GM12878 (cell line): ENCODE measurements at regions of chr3 and their contacts with region 1.

Region 1: DNA sequence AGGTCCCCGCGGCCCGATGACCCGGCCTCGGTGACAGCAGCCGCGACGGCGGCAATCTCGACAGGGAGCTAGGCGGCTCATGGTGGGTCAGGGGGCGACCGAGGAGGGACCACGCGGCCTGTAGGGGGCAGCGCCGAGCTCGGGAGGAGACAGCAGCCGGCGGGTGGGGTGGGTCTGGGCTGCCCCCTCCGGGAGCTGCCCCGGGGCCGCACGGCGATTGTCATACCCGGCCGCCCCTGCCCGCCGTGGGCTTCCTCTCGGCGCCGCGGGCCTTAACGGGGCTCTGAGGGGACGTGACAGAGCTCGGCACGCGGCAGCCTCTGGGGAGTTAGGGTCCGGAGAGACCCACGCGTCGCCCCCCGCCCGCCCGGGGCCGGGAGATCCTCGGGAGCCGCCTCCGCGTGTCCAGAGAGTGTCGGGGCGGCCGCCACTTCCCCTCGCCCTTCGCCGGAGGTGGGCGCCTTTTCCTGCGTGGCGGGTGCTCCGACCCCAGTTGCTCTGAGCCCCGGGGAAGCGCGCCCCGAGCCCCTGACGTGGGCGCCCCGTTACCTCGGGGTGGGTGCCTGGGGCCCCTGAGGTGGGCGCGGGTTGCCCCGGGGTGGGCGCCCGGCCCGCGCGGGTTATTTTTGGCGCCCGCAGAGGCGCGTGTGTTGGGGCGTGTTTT is 539 bp upstream of the PLCL2 start:
- DNase-seq: no peak
- ATAC-seq: peak; percentile 71
- H3K4me3 ChIP-seq: peak overlapping the region; percentile 75
- H3K27ac ChIP-seq: peak overlapping the region; percentile 93
- H3K4me1 ChIP-seq: peaks cover 2% of the 10 kb centered on the region; the same call in 1 of the 2 replicates
- H3K27me3 ChIP-seq: no peaks in the 10 kb centered on the region
- CTCF ChIP-seq: peak; percentile 37 to 79 (median 74)
- EP300 ChIP-seq: no peak
- POLR2A ChIP-seq: peak; percentile 66
- RAD21 ChIP-seq: peak; percentile 64

Region 2: DNA sequence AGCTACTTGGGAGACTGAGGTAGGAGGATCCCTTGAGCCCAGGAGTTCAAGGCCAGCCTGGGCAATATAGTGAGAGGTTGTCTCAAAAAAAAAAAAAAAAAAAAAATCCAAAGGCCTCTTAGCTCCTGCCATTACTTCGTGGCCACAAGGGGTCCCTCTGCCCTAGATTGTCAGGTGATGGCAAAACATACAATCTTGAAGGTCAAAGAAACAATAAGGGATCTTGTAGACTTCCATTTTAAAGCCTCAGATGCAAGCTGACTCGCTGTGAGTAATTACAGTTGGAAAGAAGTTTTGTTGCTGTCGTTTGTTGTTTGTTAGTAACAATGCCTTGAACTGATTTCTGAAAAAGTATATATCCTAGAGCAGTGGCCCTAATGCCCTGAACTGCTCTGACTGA is 55.4 kb before region 1 on chr3:
- CTCF ChIA-PET with region 1: interaction called, 5 read pairs
- POLR2A ChIA-PET with region 1: interaction called, 4 read pairs
- RAD21 ChIA-PET with region 1: interaction called, 12 read pairs
- SMC1A ChIA-PET with region 1: interaction called, 5 read pairs
- in situ Hi-C with region 1: no loop called
- intact Hi-C with region 1: loop called (anchors 2 kb)
- DNase-seq: no peak
- ATAC-seq: peak; percentile 90
- H3K4me3 ChIP-seq: no peak overlapping the region
- H3K27ac ChIP-seq: no peak overlapping the region
- H3K4me1 ChIP-seq: peaks cover 8% of the 10 kb centered on the region
- H3K27me3 ChIP-seq: no peaks in the 10 kb centered on the region
- CTCF ChIP-seq: peak; percentile 58 to 65 (median 60)
- EP300 ChIP-seq: no peak
- POLR2A ChIP-seq: no peak
- RAD21 ChIP-seq: peak; percentile 93

Region 3: DNA sequence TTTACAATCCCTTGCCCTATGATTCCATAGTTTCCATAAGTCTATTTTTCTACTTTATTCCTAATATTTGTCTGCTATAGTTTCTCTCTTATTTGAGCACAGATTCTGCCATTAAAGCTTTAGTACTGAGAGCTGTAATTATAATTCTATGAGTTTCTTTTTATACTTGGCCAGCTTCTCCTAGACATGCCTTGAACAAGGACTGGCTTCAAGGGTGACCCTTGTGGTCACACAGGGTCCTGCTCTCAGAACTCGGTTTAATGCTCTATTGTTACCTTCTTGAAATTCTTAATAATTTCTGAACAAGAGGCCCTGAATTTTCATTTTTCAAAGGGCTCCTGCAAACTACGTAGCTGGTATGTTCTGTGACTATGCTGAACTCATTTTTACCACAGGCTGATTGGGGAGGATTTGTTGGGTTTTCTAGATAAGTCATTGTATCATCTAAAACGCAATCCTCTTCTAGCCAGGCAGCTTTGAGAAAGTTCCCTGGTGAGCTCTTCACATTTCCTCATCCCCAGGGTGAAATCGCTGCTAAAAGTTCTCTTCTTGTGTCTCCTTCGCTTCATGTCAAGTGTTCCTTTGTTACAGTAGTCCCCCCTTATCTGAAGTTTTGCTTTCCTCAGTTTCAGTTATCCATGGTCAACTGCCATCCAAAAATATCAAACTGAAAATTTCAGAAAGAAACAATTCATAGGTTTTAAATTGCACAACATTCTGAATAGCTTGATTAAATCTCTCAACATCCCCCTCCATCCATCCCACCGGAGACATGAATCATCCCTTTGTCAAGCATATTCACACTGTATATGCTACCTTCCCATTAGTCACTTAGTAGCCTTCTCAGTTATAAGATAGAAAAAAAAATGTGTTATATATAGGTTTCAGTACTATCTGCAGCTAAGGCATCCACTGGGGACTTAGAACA is 12.0 kb before region 1 on chr3:
- CTCF ChIA-PET with region 1: interaction called, 50 read pairs
- POLR2A ChIA-PET with region 1: interaction called, 3 read pairs
- RAD21 ChIA-PET with region 1: interaction called, 3 read pairs
- SMC1A ChIA-PET with region 1: interaction called, 5 read pairs
- in situ Hi-C with region 1: no loop called
- intact Hi-C with region 1: no loop called
- DNase-seq: no peak
- ATAC-seq: no peak
- H3K4me3 ChIP-seq: no peak overlapping the region
- H3K27ac ChIP-seq: no peak overlapping the region
- H3K4me1 ChIP-seq: no peaks in the 10 kb centered on the region
- H3K27me3 ChIP-seq: no peaks in the 10 kb centered on the region
- CTCF ChIP-seq: no peak
- EP300 ChIP-seq: no peak
- POLR2A ChIP-seq: no peak
- RAD21 ChIP-seq: no peak

Region 4: GRCh38 chr3:16912400-16913263 is 28.4 kb after region 1 on chr3:
- CTCF ChIA-PET with region 1: interaction called, 26 read pairs
- POLR2A ChIA-PET with region 1: interaction called, 4 read pairs
- RAD21 ChIA-PET with region 1: interaction called, 76 read pairs
- SMC1A ChIA-PET with region 1: interaction called, 68 read pairs
- in situ Hi-C with region 1: no loop called
- intact Hi-C with region 1: no loop called
- DNase-seq: peak; percentile 90
- ATAC-seq: peak; percentile 92
- H3K4me3 ChIP-seq: peak overlapping the region; percentile 27
- H3K27ac ChIP-seq: peak overlapping the region; percentile 99
- H3K4me1 ChIP-seq: peaks cover 49% of the 10 kb centered on the region
- H3K27me3 ChIP-seq: no peaks in the 10 kb centered on the region
- CTCF ChIP-seq: no peak
- EP300 ChIP-seq: peak; percentile 91 to 96
- POLR2A ChIP-seq: no peak
- RAD21 ChIP-seq: no peak

Region 5: DNA sequence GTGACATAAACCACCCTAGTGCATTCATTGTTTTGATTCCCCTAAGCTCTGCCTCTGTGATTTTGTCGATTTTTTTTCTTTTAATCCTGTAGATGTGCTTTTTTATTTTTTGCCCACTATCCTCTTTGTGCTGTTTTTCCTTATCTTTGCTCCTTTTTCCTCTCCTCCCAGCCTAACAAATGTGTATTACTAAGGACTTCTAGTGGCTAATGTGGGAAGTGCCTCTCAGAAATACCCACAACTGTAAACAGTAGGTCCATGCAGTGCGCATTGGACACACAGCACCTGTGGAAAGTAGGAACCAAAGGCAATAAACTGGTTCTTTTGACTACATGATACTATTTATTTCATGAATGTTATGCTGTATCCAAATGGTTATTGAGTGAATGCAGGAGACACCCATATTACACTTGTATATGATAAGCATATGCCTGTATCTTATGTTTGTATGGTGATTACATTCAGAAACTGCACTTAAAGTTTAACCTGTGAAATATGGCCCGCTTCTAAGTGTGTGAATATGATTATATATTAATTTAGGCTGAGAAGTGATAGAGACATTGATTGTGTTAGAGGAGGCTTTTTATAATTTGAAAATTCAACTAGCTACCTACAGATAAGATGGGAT is 148.3 kb after region 1 on chr3:
- CTCF ChIA-PET with region 1: interaction called, 43 read pairs
- POLR2A ChIA-PET with region 1: interaction called, 4 read pairs
- RAD21 ChIA-PET with region 1: interaction called, 54 read pairs
- SMC1A ChIA-PET with region 1: interaction called, 38 read pairs
- in situ Hi-C with region 1: no loop called
- intact Hi-C with region 1: loop called (anchors 2 kb)
- DNase-seq: no peak
- ATAC-seq: peak; percentile 81
- H3K4me3 ChIP-seq: no peak overlapping the region
- H3K27ac ChIP-seq: no peak overlapping the region
- H3K4me1 ChIP-seq: peaks cover 15% of the 10 kb centered on the region
- H3K27me3 ChIP-seq: no peaks in the 10 kb centered on the region
- CTCF ChIP-seq: peak; percentile 54 to 64 (median 54); a peak in 5 of 6 replicates
- EP300 ChIP-seq: no peak
- POLR2A ChIP-seq: no peak
- RAD21 ChIP-seq: peak; percentile 76

Region 6: GRCh38 chr3:17195856-17196604 is 311.8 kb after region 1 on chr3:
- CTCF ChIA-PET with region 1: interaction called, 5 read pairs
- POLR2A ChIA-PET with region 1: interaction called, 4 read pairs
- RAD21 ChIA-PET with region 1: interaction called, 12 read pairs
- SMC1A ChIA-PET with region 1: interaction called, 6 read pairs
- in situ Hi-C with region 1: no loop called
- intact Hi-C with region 1: no loop called
- DNase-seq: peak; percentile 83
- ATAC-seq: peak; percentile 91
- H3K4me3 ChIP-seq: no peak overlapping the region
- H3K27ac ChIP-seq: peak overlapping the region; percentile 54
- H3K4me1 ChIP-seq: peaks cover 25% of the 10 kb centered on the region
- H3K27me3 ChIP-seq: no peaks in the 10 kb centered on the region
- CTCF ChIP-seq: peak; percentile 32 to 49 (median 32); a peak in 4 of 6 replicates
- EP300 ChIP-seq: peak; percentile 61 to 89; a peak in 3 of 4 replicates
- POLR2A ChIP-seq: no peak
- RAD21 ChIP-seq: peak; percentile 51